Activated B cell treated with CpG ODN at 0.5 μM for 24 hours (primary cell): ENCODE measurements at regions of chr18 and their contacts with region 1.

Region 1: GRCh38 chr18:23266717-23267446 is 131.6 kb downstream of the CABLES1 start:
- DNase-seq: no peak
- ATAC-seq: peak; percentile 67
- H3K4me3 Mint-ChIP-seq: no peak overlapping the region
- H3K27ac Mint-ChIP-seq: peak overlapping the region; percentile 57
- H3K4me1 Mint-ChIP-seq: peaks cover 40% of the 10 kb centered on the region
- H3K27me3 Mint-ChIP-seq: no peaks in the 10 kb centered on the region
- CTCF ChIP-seq: no peak

Region 2: DNA sequence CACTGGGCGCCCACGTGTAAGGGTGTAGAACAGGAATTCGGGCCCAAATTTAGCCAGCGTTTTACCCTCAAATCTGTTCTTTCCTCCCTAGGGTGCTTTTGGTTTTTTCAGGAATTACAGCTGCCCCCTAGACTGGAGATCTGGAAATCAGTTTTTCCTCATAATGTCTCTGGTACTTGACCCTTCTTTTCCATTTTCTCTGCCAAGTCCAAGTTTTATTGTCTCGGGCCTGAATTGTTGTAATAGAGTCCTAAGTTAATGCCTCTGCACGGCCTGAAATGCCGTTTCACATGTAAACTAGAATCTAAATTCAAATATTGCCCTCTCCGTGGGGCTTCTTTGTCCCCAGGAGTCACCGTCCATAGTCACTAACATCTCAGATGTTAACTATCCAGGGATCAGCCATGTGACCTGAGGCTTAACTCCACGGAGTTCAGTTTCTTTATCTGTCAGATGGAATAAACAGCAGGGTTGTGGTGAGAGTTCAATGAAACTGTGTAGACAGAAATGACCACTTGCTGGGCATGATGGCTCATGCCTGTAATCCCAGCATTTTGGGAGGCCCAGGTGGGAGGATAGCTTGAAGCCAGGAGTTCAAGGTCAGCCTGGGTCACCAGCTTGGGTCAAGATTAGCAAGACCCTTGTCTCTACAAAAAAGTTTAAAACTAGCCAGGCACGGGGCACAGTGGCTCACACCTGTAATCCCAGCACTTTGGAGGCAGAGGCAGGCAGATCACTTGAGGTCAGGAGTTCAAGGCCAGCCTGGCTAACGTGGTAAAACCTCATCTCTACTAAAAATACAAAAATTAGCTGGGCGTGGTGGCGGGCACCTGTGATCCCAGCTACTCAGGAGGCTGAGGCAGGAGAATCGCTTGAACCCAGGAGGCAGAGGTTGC is 144.3 kb before region 1 on chr18:
- CTCF ChIA-PET with region 1: no interaction called
- POLR2A ChIA-PET with region 1: no interaction called
- intact Hi-C with region 1: no loop called
- DNase-seq: no peak
- ATAC-seq: no peak
- H3K4me3 Mint-ChIP-seq: no peak overlapping the region
- H3K27ac Mint-ChIP-seq: no peak overlapping the region
- H3K4me1 Mint-ChIP-seq: no peaks in the 10 kb centered on the region
- H3K27me3 Mint-ChIP-seq: peaks cover 13% of the 10 kb centered on the region
- CTCF ChIP-seq: no peak

Region 3: GRCh38 chr18:23321996-23322395 is 55.1 kb after region 1 on chr18:
- CTCF ChIA-PET with region 1: no interaction called
- POLR2A ChIA-PET with region 1: no interaction called
- intact Hi-C with region 1: loop called (anchors 5 kb)
- DNase-seq: no peak
- ATAC-seq: no peak
- H3K4me3 Mint-ChIP-seq: no peak overlapping the region
- H3K27ac Mint-ChIP-seq: no peak overlapping the region
- H3K4me1 Mint-ChIP-seq: peaks cover 14% of the 10 kb centered on the region
- H3K27me3 Mint-ChIP-seq: no peaks in the 10 kb centered on the region
- CTCF ChIP-seq: no peak